GM10248 (cell line): ENCODE measurements at regions of chr17 and their contacts with region 1.

Region 1: DNA sequence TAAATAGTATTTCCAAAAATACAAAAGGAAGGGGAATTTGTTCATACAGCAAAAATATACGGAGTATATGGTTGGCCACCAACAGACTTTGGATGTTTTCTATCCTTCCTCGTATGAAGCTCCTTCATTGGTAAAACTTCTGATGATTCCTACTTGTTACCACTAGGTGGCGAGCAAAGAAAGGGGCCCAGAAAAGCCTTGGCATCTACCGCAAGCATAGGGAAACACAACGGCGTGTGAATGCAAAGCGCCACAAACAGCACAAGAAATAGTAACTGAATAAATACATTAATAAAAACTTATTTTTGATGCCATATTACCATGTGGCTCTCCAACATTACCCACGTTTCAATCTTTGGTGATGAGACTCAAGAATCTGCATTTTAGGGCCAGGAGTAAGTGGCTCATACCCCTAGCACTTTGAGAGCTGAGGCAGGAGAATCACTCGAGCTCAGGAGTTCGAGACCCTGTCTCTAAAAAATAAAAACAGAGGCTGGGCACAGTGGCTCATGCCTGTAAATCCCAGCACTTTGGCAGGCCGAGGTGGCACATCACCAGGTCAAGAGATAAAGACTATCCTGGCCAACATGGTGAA is 34.5 kb downstream of the YWHAE start:
- DNase-seq: peak; percentile 74
- CTCF ChIP-seq: peak; percentile 67

Region 2: DNA sequence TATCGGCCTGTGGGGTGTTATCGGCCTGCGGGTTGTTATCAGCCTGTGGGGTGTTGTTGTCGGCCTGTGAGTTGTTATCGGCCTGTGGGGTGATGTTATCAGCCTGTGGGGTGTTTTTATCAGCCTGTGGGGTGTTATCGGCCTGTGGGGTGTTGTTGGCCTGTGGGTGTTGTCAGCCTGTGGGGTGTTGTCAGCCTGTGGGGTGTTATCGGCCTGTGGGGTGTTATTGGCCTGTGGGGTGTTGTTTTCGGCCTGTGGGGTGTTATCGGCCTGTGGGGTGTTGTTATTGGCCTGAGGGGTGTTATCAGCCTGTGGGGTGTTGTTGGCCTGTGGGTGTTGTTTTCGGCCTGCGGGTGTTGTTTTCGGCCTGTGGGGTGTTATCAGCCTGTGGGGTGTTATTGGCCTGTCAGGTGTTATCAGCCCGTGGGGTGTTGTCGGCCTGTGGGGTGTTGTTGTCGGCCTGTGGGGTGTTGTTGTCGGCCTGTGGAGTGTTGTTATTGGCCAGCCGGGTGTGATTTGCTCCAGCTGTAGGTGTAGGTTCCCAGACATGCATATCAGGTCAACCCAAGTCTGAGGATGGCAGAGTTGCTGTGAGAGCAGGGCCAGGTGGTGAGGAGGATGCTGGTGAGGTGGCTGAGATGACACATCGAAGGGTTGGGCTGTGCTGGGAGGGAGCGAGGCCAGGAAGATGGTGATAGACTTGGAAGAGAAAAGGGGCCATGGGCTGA is 79.0 kb before region 1 on chr17:
- CTCF ChIA-PET with region 1: no interaction called
- POLR2A ChIA-PET with region 1: no interaction called
- DNase-seq: no peak
- CTCF ChIP-seq: no peak

Region 3: DNA sequence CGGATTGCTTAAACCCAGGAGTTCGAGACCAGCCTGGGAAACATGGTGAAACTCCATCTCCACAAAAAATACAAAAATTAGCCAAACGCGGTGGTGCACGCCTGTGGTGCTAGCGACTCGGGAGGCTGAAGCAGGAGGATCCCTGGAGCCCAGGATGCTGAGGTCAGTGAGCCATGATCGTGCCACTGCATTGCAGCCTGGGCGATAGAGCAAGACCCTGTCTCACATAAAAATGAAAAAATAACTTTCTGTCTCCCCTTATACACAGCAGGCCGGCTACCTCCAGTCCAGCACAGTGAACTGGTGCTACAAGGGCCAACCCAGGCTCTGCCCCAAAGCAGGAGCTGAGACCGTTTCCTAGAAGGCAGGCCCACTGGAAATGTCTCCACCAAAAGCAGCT is 25.2 kb before region 1 on chr17:
- CTCF ChIA-PET with region 1: interaction called, 21 read pairs
- POLR2A ChIA-PET with region 1: interaction called, 3 read pairs
- DNase-seq: no peak
- CTCF ChIP-seq: no peak

Region 4: GRCh38 chr17:1390433-1391367 is 25.2 kb after region 1 on chr17:
- CTCF ChIA-PET with region 1: interaction called, 53 read pairs
- POLR2A ChIA-PET with region 1: interaction called, 10 read pairs
- DNase-seq: no peak
- CTCF ChIP-seq: no peak

Region 5: GRCh38 chr17:1434150-1434549 is 68.6 kb after region 1 on chr17:
- CTCF ChIA-PET with region 1: interaction called, 12 read pairs
- POLR2A ChIA-PET with region 1: no interaction called
- DNase-seq: no peak
- CTCF ChIP-seq: no peak

Region 6: GRCh38 chr17:1462287-1463112 is 97.0 kb after region 1 on chr17:
- CTCF ChIA-PET with region 1: interaction called, 11 read pairs
- POLR2A ChIA-PET with region 1: no interaction called
- DNase-seq: no peak
- CTCF ChIP-seq: no peak

Region 7: GRCh38 chr17:1516388-1517161 is 151.0 kb after region 1 on chr17 and contains the start of gene INPP5K:
- CTCF ChIA-PET with region 1: interaction called, 80 read pairs
- POLR2A ChIA-PET with region 1: no interaction called
- DNase-seq: peak; percentile 99
- CTCF ChIP-seq: no peak